PC-9 (cell line): ENCODE measurements at regions of chr12 and their contacts with region 1.

Region 1: DNA sequence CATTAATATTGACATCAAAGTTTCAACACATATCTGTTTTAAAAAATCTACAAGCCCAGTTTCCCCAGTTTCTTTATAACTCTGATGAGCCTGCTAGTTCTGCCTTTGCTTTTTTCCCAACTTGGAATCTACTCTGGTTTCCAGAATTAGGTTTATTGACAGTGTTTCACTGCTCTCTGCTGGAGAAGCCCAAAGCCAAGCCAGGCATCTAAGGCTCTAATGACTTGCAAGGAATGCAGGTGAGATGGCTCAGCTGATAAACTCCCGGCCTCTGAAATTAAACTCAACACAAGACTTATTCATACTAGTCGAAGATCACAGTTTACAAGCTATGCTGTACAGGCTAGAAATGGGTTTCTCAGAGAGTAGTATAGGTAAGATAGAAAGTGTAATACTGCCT is 54.3 kb downstream of the HMGA2 start:
- DNase-seq: peak; percentile 71 to 85
- H3K4me3 ChIP-seq: no peak overlapping the region
- H3K27ac ChIP-seq: no peak overlapping the region
- H3K4me1 ChIP-seq: peaks cover 51% of the 10 kb centered on the region
- H3K27me3 ChIP-seq: no peaks in the 10 kb centered on the region
- CTCF ChIP-seq: peak; percentile 56

Region 2: GRCh38 chr12:65313719-65314317 is 564.7 kb before region 1 on chr12:
- CTCF ChIA-PET with region 1: no interaction called
- POLR2A ChIA-PET with region 1: no interaction called
- intact Hi-C with region 1: loop called (anchors 1 kb)
- DNase-seq: no peak
- H3K4me3 ChIP-seq: no peak overlapping the region
- H3K27ac ChIP-seq: no peak overlapping the region
- H3K4me1 ChIP-seq: no peaks in the 10 kb centered on the region
- H3K27me3 ChIP-seq: no peaks in the 10 kb centered on the region
- CTCF ChIP-seq: peak; percentile 76

Region 3: GRCh38 chr12:65556681-65557437 is 321.7 kb before region 1 on chr12:
- CTCF ChIA-PET with region 1: interaction called, 6 read pairs
- POLR2A ChIA-PET with region 1: no interaction called
- intact Hi-C with region 1: loop called (anchors 1 kb)
- DNase-seq: peak; percentile 63 to 82
- H3K4me3 ChIP-seq: no peak overlapping the region
- H3K27ac ChIP-seq: no peak overlapping the region
- H3K4me1 ChIP-seq: peaks cover 11% of the 10 kb centered on the region
- H3K27me3 ChIP-seq: no peaks in the 10 kb centered on the region
- CTCF ChIP-seq: peak; percentile 91

Region 4: DNA sequence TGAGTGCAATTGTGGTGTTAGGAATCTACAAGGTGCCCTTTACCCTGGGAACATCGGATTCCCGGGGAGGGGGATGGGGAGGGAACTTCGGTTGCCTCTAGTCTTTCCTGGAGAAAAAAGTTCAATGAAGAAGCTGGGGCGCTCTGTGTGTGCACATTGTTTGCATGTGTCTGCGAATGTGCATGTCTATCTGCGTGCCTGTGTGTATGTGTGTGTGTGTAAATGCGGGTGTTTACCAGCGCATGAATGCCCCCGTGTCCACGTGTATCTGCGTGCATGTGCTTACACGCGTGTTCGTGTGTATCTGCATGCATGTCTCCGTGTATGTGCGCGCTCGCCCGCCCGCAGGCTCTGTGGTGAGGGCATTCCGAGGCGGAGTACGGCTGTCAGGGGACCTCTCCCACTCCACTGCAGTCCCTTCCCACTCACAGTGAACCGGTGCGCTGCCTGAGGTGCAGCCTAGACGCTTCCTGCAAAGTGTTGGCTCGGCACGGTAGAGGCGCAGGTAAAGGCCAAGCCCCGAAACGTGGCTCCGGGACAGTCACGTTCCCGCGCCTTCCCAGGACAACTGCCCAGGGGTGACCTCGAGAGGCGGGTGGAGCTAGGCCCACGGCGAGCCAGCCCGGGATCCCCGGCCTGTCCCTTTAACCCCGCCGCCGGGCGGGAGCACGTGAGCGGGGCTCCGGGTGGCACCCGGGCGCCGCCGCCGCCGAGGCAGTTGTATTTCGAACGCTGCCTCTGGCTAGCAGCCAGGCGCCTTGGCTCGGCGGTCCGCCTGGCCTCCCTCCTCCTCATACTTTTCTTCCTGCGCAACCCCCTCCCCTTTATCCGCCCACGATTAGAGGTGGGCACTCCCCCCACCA is 54.8 kb before region 1 on chr12:
- CTCF ChIA-PET with region 1: interaction called, 3 read pairs
- POLR2A ChIA-PET with region 1: interaction called, 4 read pairs
- intact Hi-C with region 1: loop called (anchors 1 kb)
- DNase-seq: peak; percentile 54 to 61
- H3K4me3 ChIP-seq: peak overlapping the region; percentile 93
- H3K27ac ChIP-seq: peak overlapping the region; percentile 88
- H3K4me1 ChIP-seq: peaks cover 49% of the 10 kb centered on the region
- H3K27me3 ChIP-seq: no peaks in the 10 kb centered on the region
- CTCF ChIP-seq: no peak

Region 5: GRCh38 chr12:66035288-66035966 is 156.9 kb after region 1 on chr12:
- CTCF ChIA-PET with region 1: no interaction called
- POLR2A ChIA-PET with region 1: no interaction called
- intact Hi-C with region 1: loop called (anchors 2 kb)
- DNase-seq: no peak
- H3K4me3 ChIP-seq: no peak overlapping the region
- H3K27ac ChIP-seq: no peak overlapping the region
- H3K4me1 ChIP-seq: peaks cover 7% of the 10 kb centered on the region; the same call in 1 of the 2 replicates
- H3K27me3 ChIP-seq: no peaks in the 10 kb centered on the region
- CTCF ChIP-seq: peak; percentile 68

Region 6: GRCh38 chr12:66257990-66258389 is 379.4 kb after region 1 on chr12:
- CTCF ChIA-PET with region 1: no interaction called
- POLR2A ChIA-PET with region 1: no interaction called
- intact Hi-C with region 1: no loop called
- DNase-seq: no peak
- H3K4me3 ChIP-seq: no peak overlapping the region
- H3K27ac ChIP-seq: no peak overlapping the region
- H3K4me1 ChIP-seq: no peaks in the 10 kb centered on the region
- H3K27me3 ChIP-seq: no peaks in the 10 kb centered on the region
- CTCF ChIP-seq: no peak

Region 7: DNA sequence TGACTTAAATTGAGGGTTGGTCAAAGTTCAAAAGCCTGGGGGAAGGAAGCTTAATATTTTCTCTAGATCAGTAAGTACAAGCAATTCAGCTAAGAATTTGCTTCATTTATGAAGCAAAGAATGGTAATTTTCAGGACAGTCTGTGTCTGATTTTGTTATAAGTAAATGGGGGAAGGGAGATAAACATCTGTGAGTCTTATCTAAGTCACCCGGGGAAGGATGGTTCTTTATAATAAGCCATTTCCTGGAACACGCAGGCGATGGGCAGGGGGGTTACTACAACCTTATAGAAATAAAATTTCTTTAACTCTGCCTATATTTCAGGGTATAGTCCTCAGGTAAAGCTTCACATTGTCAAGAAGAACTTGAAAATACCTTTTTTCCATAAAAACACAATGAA is 466.7 kb after region 1 on chr12:
- CTCF ChIA-PET with region 1: no interaction called
- POLR2A ChIA-PET with region 1: no interaction called
- intact Hi-C with region 1: no loop called
- DNase-seq: no peak
- H3K4me3 ChIP-seq: no peak overlapping the region
- H3K27ac ChIP-seq: no peak overlapping the region
- H3K4me1 ChIP-seq: no peaks in the 10 kb centered on the region
- H3K27me3 ChIP-seq: no peaks in the 10 kb centered on the region
- CTCF ChIP-seq: no peak